Right cardiac atrium (tissue), 5 donors: ENCODE measurements at regions of chr10 and their contacts with region 1.

Region 1: DNA sequence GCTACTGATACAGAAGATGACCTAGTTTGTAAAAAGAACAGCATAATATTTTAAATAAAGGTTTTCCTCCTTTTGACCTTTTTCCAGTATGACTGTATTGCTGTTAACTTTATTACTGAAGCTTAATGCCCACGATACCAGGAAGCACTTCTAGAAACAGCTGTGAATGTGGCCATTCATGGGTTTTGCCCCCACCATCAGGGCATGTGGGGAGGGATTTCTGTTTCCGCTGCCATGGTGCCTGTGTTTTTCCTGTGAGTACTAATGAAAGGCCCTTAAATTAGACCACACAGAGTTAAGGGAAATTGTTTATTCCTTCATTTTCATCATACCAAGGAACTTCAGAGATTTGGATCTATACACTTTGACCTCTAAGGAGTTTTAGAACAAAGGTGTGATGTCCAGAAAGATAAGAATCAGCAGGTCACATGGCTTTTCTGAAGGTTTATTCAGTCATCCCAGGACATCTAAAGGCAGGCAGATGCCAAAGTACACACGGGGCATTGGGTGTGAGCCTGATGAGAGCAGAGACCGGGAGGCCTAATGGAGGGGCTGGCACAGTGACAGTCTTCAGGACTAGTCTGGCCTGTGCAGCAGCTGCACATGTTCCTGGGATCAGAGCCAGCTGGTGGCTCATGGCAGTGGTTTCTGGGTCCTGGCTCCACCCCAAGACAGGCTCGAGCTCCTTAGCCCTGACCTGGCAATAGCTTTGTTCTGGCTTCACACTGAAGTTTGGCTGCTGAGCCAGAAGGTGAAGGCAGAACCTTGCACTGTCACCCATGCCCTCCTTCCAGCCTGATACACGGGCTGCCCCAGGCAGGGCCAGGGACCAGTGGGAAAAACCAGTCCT is 190.9 kb downstream of the REEP3 start:
- DNase-seq: peak; percentile 96 to 97 (median 96)
- ATAC-seq: peak; percentile 93
- H3K4me3 ChIP-seq: no peak overlapping the region
- H3K27ac ChIP-seq: peak overlapping the region; percentile 98
- H3K4me1 ChIP-seq: peaks cover 19% of the 10 kb centered on the region
- H3K27me3 ChIP-seq: no peaks in the 10 kb centered on the region

Region 2: DNA sequence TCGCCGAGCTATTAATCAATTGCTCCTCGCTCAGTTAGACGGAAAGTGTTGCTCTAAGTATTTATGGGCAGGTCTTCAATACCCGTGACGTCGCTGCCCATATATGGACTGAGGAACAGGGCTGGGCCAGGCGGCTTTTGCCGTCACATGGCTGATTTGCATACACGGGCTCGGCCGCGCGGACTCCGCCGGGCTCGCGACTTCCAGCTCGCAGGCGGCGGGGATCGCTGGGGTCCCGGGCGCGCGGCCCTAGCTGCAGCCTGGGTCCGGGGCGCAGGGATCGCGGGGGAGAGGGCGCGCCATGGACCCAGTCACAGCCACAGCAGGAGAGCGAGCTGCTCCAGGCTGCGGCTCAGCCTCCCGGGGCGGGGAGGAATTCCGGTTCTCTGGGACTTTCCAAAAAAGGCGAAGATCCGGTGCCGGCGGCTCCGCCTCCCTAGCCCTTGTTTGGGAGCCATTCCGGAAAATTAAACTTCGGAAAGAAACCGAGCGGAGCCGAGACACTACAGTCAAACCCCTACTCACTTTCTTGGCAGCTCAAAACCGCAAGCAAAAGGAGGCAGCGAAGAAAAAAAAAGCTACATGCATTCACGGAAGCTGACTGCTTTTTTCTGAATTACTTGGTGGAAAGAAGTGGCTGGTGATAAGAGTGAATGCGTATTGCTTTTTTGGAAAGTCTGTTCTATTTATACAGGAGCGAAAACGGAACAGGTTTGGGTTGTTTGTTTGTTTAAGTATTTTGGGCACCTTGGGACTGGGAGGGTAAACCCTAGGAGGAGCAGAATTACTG is 895.6 kb before region 1 on chr10 and contains the start of gene EGR2:
- intact Hi-C with region 1: loop called in 1 of 4 experiments (anchors 10 kb)
- DNase-seq: peak; percentile 92 to 97 (median 96)
- ATAC-seq: peak; percentile 91 to 95
- H3K4me3 ChIP-seq: peak within 1 kb of the TSS; percentile 96
- H3K27ac ChIP-seq: peak within 1 kb of the TSS; percentile 71
- H3K4me1 ChIP-seq: peaks cover 1% of the 10 kb centered on the region
- H3K27me3 ChIP-seq: no peaks in the 10 kb centered on the region
- total RNA-seq, gene EGR2: 0.54 to 4.7 (median 1.6) TPM

Region 3: GRCh38 chr10:63166742-63167258 is 545.3 kb before region 1 on chr10:
- intact Hi-C with region 1: loop called in 1 of 4 experiments (anchors 10 kb)
- DNase-seq: no peak
- ATAC-seq: peak; percentile 50 to 58
- H3K4me3 ChIP-seq: no peak overlapping the region
- H3K27ac ChIP-seq: no peak overlapping the region
- H3K4me1 ChIP-seq: peaks cover 7% of the 10 kb centered on the region
- H3K27me3 ChIP-seq: no peaks in the 10 kb centered on the region

Region 4: GRCh38 chr10:63206997-63207811 is 504.9 kb before region 1 on chr10:
- intact Hi-C with region 1: loop called in 1 of 4 experiments (anchors 10 kb)
- DNase-seq: peak in 1 of 3 donors; percentile 53
- ATAC-seq: peak; percentile 85 to 86
- H3K4me3 ChIP-seq: peak overlapping the region; percentile 29
- H3K27ac ChIP-seq: peak overlapping the region; percentile 65
- H3K4me1 ChIP-seq: peaks cover 5% of the 10 kb centered on the region
- H3K27me3 ChIP-seq: no peaks in the 10 kb centered on the region

Region 5: DNA sequence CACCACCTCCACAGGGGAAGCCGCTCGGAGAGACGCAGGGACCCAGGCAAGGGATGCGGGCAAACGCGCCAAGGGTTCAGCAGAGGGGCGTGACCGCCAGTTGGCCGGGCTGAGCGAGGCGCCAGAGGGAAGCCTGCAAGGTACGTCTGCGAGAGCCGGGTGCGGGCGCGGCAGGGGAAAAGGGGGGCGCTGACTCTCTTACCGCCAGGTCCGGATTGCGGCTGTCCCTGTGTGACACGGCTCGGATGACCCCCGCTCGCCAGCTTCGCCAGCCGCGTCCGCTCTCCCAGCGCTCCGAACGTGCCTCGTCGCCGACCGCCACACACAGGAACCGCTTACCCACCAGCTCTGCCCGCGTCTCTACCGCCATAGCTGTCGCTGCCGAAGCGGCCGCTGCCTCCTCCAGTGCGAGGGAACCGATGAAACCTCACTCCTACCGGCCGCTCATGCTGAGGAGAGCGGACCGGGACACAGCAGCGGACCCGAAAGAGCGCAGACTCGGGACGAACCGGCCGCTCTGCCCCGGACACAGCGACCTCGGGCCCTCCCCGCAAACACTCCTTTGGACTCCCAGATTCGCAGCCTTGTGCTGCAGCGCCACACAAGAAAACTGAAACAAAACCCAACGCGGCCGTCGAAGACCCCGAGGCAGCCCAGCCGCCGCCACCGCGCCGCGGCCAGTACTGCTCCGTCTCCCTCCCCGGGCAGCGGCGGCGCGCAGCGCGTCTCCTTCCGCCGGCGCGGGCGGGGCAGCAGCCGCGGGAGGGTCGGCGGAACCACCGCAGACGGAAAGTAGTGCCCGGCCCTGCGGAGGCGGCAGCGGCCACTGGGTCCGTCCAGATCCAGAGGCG is 246.6 kb before region 1 on chr10 and contains the start of gene JMJD1C:
- intact Hi-C with region 1: loop called in 1 of 4 experiments (anchors 10 kb)
- DNase-seq: peak; percentile 83 to 93 (median 89)
- ATAC-seq: peak; percentile 95 to 96
- H3K4me3 ChIP-seq: peak within 1 kb of the TSS; percentile 64
- H3K27ac ChIP-seq: peak within 1 kb of the TSS; percentile 88
- H3K4me1 ChIP-seq: no peaks in the 10 kb centered on the region
- H3K27me3 ChIP-seq: no peaks in the 10 kb centered on the region
- total RNA-seq, gene JMJD1C: 42.2 to 44.8 (median 43.8) TPM

Region 6: GRCh38 chr10:63554657-63555056 is 157.4 kb before region 1 on chr10:
- intact Hi-C with region 1: no loop called
- DNase-seq: no peak
- ATAC-seq: peak in 1 of 2 donors; percentile 52
- H3K4me3 ChIP-seq: no peak overlapping the region
- H3K27ac ChIP-seq: no peak overlapping the region
- H3K4me1 ChIP-seq: no peaks in the 10 kb centered on the region
- H3K27me3 ChIP-seq: no peaks in the 10 kb centered on the region

Region 7: GRCh38 chr10:63681993-63682697 is 29.9 kb before region 1 on chr10:
- intact Hi-C with region 1: loop called in 1 of 4 experiments (anchors 2 kb)
- DNase-seq: peak; percentile 19 to 71 (median 57)
- ATAC-seq: peak; percentile 97 to 98
- H3K4me3 ChIP-seq: no peak overlapping the region
- H3K27ac ChIP-seq: no peak overlapping the region
- H3K4me1 ChIP-seq: no peaks in the 10 kb centered on the region
- H3K27me3 ChIP-seq: no peaks in the 10 kb centered on the region

Region 8: GRCh38 chr10:64261092-64261491 is 549.0 kb after region 1 on chr10:
- intact Hi-C with region 1: no loop called
- DNase-seq: no peak
- ATAC-seq: no peak
- H3K4me3 ChIP-seq: no peak overlapping the region
- H3K27ac ChIP-seq: no peak overlapping the region
- H3K4me1 ChIP-seq: no peaks in the 10 kb centered on the region
- H3K27me3 ChIP-seq: no peaks in the 10 kb centered on the region

Region 9: DNA sequence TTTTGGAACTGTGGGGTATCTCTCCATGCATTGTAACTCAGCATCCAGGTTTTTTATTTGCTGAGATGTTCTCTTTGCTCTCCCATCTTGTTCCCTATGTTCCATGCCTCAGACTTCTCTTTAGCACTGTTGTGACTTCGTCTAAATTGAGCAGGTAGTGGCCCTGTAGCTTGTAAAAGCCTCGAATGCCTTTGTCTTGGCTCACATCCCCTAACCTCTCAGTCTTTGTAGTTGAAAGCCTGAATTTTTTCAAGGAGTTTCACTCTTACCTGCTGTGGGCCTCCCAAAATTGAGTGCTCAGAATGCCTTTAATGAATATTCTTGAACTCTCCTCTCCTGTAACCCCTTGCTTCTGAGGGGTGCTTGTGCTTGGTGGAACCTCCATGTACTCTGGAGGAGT is 946.4 kb after region 1 on chr10:
- intact Hi-C with region 1: no loop called
- DNase-seq: no peak
- ATAC-seq: no peak
- H3K4me3 ChIP-seq: no peak overlapping the region
- H3K27ac ChIP-seq: no peak overlapping the region
- H3K4me1 ChIP-seq: no peaks in the 10 kb centered on the region
- H3K27me3 ChIP-seq: no peaks in the 10 kb centered on the region